ENCODE measurements at regions of chr1 and their contacts with region 1.

Region 1: GRCh38 chr1:209248649-209249279 is 334.8 kb upstream of the CAMK1G start:
- DNase-seq: no peak
- H3K4me3 ChIP-seq: no peak overlapping the region
- CTCF ChIP-seq: peak; percentile 68

Region 2: DNA sequence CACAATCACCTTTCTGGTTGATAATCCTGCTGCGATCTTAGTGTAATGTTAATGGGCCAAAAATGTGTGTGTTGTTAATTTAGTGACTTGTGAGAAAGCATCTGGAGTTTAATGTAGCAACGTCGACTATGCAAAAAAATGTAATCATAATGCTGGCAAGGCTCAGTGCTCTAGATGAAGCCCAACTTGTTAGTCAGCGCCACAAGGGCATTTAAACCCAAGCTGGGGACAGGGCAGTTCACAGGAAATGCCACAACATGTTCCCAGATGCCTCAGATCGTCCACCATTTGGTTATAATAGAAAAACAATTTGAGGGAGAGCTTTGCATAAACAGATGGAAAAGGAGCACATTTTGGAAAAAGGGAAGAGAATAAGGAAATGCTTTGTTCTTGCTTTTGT is 419.2 kb before region 1 on chr1:
- CTCF ChIA-PET with region 1: no interaction called
- POLR2A ChIA-PET with region 1: no interaction called
- DNase-seq: no peak
- H3K4me3 ChIP-seq: no peak overlapping the region
- CTCF ChIP-seq: no peak

Region 3: DNA sequence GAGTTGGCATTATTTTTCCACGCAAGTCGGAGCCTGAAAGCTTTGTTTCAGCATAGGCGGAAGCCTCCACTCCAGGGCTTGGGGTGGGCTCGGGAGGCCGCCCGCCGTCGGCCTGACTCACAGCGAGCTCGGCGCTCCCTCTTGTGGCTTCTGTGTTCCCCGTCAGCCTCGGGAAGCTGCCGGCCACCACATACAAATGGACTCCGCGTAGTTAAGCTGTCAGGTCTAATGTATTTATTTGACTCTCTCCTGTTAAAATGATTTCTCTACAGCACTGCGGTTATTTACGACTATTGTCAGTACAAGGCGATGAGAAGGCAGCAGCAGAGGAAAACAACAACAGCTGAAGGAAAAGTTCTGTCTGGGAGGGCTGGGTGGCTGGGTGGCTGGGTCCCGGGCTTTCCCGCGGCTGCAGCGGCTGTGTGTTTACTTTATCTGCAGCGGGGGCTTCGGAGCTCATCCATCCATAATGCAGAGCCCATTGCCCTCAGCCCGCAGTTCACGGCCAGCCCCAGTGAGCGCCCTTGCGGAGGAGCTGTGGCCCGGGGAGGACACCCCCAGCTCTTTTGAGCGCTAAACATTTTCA is 41.0 kb before region 1 on chr1:
- CTCF ChIA-PET with region 1: interaction called, 92 read pairs
- POLR2A ChIA-PET with region 1: no interaction called
- DNase-seq: peak; percentile 4
- H3K4me3 ChIP-seq: peak overlapping the region; percentile 48
- CTCF ChIP-seq: peak; percentile 95

Region 4: DNA sequence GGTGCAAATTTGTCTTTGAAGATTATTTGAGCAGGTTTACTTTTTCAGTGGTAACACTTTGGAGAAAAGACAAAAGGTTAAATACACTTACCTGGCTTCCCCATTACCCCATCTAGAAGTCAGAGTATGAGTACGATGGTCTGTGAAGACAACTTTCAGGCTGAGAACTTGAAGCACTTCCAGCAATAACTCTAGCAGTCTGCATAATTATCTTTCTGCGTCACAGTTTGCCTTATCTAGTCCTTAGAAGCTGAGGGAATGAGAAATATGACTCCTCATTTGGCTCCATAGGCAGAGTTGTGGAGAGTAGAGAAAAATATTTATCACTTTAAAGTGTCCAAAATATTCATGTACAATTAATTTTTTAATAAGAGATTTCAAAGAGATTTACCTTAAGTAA is 11.4 kb after region 1 on chr1:
- CTCF ChIA-PET with region 1: interaction called, 58 read pairs
- POLR2A ChIA-PET with region 1: no interaction called
- DNase-seq: no peak
- H3K4me3 ChIP-seq: no peak overlapping the region
- CTCF ChIP-seq: no peak

Region 5: DNA sequence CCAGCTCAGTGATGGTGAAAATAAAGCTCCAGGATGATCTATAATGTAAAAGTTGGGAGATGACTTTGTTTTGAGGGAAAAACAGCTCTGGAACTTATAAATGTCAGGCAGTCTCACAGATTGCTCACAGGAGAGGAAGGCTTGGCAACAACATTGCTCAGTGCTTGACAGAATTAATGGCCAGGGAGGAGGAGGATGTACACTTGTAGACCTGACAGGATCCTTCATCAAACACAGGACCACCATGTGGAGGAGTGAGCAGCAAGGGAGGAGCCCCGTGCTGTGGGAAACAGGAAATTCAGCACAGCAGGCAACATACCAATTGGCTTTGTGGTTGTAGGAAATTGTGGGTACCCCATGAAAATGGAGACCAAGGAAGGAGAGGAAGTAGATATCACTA is 43.0 kb after region 1 on chr1:
- CTCF ChIA-PET with region 1: interaction called, 10 read pairs
- POLR2A ChIA-PET with region 1: no interaction called
- DNase-seq: no peak
- H3K4me3 ChIP-seq: no peak overlapping the region
- CTCF ChIP-seq: no peak

Region 6: GRCh38 chr1:209342441-209343175 is 93.8 kb after region 1 on chr1:
- CTCF ChIA-PET with region 1: interaction called, 12 read pairs
- POLR2A ChIA-PET with region 1: no interaction called
- DNase-seq: no peak
- H3K4me3 ChIP-seq: no peak overlapping the region
- CTCF ChIP-seq: no peak

Region 7: DNA sequence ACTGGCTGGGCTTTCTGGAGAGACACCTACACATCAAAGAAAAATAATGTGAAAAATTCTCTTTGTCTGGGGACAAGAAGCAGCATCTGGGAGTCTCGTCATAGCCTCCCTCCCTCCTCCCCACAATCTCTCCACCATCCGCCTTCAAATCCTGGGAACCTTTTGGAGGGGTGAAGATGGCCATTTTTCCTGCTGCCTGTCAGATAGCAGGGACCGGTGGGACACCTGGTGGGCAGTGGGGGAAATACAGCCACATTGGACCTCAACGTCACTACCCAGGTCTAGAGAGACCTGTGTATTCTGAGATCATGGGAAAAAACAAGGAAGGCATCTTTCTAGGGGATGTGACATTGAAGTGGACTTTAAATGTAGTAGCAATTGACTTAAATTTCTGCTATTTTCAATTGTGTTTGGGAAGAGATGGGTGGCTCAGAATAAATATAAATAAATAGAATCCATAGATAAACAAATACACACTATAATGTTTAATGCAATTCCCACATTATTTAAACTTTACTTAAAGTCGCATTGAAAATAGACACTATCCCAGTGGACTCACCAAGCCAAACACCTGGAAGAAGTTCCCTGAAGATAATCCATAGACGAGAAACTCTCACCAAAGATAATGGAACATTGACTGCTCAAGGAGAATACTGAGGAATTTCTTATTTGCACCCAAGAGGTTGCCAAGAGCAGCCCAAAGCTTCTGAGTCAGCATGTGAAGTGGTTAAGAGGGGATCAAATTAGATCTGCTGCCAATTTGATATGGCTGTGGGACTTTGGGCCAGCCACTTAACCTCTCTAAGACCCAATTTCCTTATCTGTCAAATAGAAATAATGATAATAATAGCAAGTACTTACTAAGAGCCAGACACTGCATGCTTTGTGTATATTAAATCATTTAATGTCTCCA is 187.1 kb after region 1 on chr1:
- CTCF ChIA-PET with region 1: interaction called, 63 read pairs
- POLR2A ChIA-PET with region 1: no interaction called
- DNase-seq: no peak
- H3K4me3 ChIP-seq: no peak overlapping the region
- CTCF ChIP-seq: peak; percentile 95

Region 8: GRCh38 chr1:209565759-209566678 is 317.3 kb after region 1 on chr1:
- CTCF ChIA-PET with region 1: interaction called, 24 read pairs
- POLR2A ChIA-PET with region 1: no interaction called
- DNase-seq: peak; percentile 38
- H3K4me3 ChIP-seq: no peak overlapping the region
- CTCF ChIP-seq: peak; percentile 80

Region 9: DNA sequence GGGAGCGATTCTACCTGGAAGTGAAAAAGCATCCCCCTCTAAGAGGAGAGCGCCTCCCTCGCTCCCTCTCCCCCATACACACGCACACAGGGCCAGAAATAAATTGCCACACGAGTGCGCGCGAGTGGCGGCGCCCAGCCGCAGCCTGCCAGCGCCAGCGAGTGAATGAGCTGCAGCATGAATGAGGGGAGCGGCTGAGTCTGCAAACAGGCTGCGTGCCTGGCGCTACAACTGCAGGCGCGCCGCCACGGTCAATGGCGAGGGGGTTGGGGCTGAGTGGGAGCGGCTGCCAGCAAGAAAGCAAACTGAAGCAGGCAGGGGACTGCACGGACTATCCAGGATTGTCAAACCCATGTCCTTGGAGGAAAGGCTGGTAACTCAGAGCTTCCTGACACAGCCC is 336.9 kb after region 1 on chr1:
- CTCF ChIA-PET with region 1: no interaction called
- POLR2A ChIA-PET with region 1: no interaction called
- DNase-seq: no peak
- H3K4me3 ChIP-seq: peak overlapping the region; percentile 33
- CTCF ChIP-seq: no peak